IMR-90 (cell line): ENCODE measurements at regions of chr1 and their contacts with region 1.

Region 1: GRCh38 chr1:68120136-68120791 is 69.8 kb upstream of the DIRAS3 start:
- DNase-seq: peak; percentile 85
- ATAC-seq: peak; percentile 86
- H3K4me3 ChIP-seq: no peak overlapping the region
- H3K27ac ChIP-seq: no peak overlapping the region
- H3K4me1 ChIP-seq: peaks cover 9% of the 10 kb centered on the region
- H3K27me3 ChIP-seq: no peaks in the 10 kb centered on the region
- CTCF ChIP-seq: peak; percentile 85
- POLR2A ChIP-seq: no peak
- RAD21 ChIP-seq: peak; percentile 93

Region 2: GRCh38 chr1:68321084-68321685 is 200.9 kb after region 1 on chr1:
- CTCF ChIA-PET with region 1: interaction called, 4 read pairs
- POLR2A ChIA-PET with region 1: no interaction called
- dilution Hi-C with region 1: no loop called
- in situ Hi-C with region 1: no loop called
- intact Hi-C with region 1: loop called (anchors 1 kb)
- DNase-seq: peak; percentile 61
- ATAC-seq: peak; percentile 89
- H3K4me3 ChIP-seq: no peak overlapping the region
- H3K27ac ChIP-seq: no peak overlapping the region
- H3K4me1 ChIP-seq: peaks cover 19% of the 10 kb centered on the region
- H3K27me3 ChIP-seq: no peaks in the 10 kb centered on the region
- CTCF ChIP-seq: peak; percentile 64
- POLR2A ChIP-seq: no peak
- RAD21 ChIP-seq: peak; percentile 75

Region 3: GRCh38 chr1:68442822-68443556 is 322.7 kb after region 1 on chr1:
- CTCF ChIA-PET with region 1: interaction called, 6 read pairs
- POLR2A ChIA-PET with region 1: no interaction called
- dilution Hi-C with region 1: no loop called
- in situ Hi-C with region 1: no loop called
- intact Hi-C with region 1: loop called (anchors 2 kb)
- DNase-seq: peak; percentile 82
- ATAC-seq: peak; percentile 96
- H3K4me3 ChIP-seq: no peak overlapping the region
- H3K27ac ChIP-seq: no peak overlapping the region
- H3K4me1 ChIP-seq: no peaks in the 10 kb centered on the region
- H3K27me3 ChIP-seq: no peaks in the 10 kb centered on the region
- CTCF ChIP-seq: peak; percentile 74
- POLR2A ChIP-seq: no peak
- RAD21 ChIP-seq: peak; percentile 67